Activated CD8-positive, alpha-beta memory T cell treated with anti-CD3 and anti-CD28 coated beads, Interleukin-2, amount 10 ng/mL, durations not matched to agents 7 days and 5 days (primary cell): ENCODE measurements at regions of chr17 and their contacts with region 1.

Region 1: GRCh38 chr17:17812211-17813057 is 24.4 kb downstream of the SREBF1 start:
- DNase-seq: peak; percentile 73
- ATAC-seq: peak; percentile 37
- H3K4me3 Mint-ChIP-seq: no peak overlapping the region
- H3K27ac Mint-ChIP-seq: no peak overlapping the region
- H3K4me1 Mint-ChIP-seq: peaks cover 25% of the 10 kb centered on the region
- H3K27me3 Mint-ChIP-seq: no peaks in the 10 kb centered on the region

Region 2: GRCh38 chr17:17681187-17681848 is 131.1 kb before region 1 on chr17 and contains the start of gene RAI1:
- CTCF ChIA-PET with region 1: interaction called, 10 read pairs
- DNase-seq: peak; percentile 75
- ATAC-seq: peak; percentile 72
- H3K4me3 Mint-ChIP-seq: peak within 1 kb of the TSS; percentile 85
- H3K27ac Mint-ChIP-seq: peak within 1 kb of the TSS; percentile 83
- H3K4me1 Mint-ChIP-seq: peaks cover 37% of the 10 kb centered on the region
- H3K27me3 Mint-ChIP-seq: peaks cover 13% of the 10 kb centered on the region
- total RNA-seq, gene RAI1: 17.4 to 24.4 TPM

Region 3: DNA sequence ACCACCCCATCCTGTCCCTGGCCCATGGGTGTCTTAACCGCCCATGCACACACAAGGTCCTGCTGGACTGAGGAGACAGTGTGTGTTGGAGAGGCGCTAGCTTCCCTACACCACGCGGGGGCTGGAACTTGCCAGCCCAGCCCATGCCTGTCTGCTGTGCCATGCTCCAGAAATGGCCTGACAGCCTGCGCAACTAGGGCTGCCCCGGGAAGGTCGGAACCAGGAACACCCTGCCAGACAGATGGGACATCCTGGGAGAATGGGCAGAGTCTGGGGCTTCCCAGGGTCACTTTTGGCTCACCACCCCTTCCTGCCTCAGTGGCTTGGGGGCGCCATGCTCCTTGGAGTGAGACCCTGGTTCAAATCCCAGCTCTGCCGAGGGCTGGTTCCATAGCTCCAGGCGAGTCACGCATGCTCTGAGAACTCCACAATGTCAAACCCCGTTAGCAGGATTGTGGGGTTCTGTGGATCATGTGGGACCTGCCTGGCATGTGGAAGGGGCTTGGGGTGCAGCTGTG is 11.9 kb before region 1 on chr17:
- CTCF ChIA-PET with region 1: interaction called, 10 read pairs
- DNase-seq: no peak
- ATAC-seq: no peak
- H3K4me3 Mint-ChIP-seq: no peak overlapping the region
- H3K27ac Mint-ChIP-seq: no peak overlapping the region
- H3K4me1 Mint-ChIP-seq: no peaks in the 10 kb centered on the region
- H3K27me3 Mint-ChIP-seq: no peaks in the 10 kb centered on the region

Region 4: GRCh38 chr17:17823433-17824118 is 11.1 kb after region 1 on chr17:
- CTCF ChIA-PET with region 1: interaction called, 47 read pairs
- DNase-seq: peak; percentile 91
- ATAC-seq: peak; percentile 92
- H3K4me3 Mint-ChIP-seq: peak overlapping the region; percentile 76
- H3K27ac Mint-ChIP-seq: peak overlapping the region; percentile 92
- H3K4me1 Mint-ChIP-seq: peaks cover 89% of the 10 kb centered on the region
- H3K27me3 Mint-ChIP-seq: no peaks in the 10 kb centered on the region

Region 5: GRCh38 chr17:17836250-17836817 is 23.9 kb after region 1 on chr17:
- CTCF ChIA-PET with region 1: interaction called, 11 read pairs
- DNase-seq: peak; percentile 98
- ATAC-seq: peak; percentile 77
- H3K4me3 Mint-ChIP-seq: peak overlapping the region; percentile 85
- H3K27ac Mint-ChIP-seq: peak overlapping the region; percentile 95
- H3K4me1 Mint-ChIP-seq: peaks cover 71% of the 10 kb centered on the region
- H3K27me3 Mint-ChIP-seq: no peaks in the 10 kb centered on the region

Region 6: GRCh38 chr17:17859909-17860765 is 47.7 kb after region 1 on chr17:
- CTCF ChIA-PET with region 1: interaction called, 66 read pairs
- DNase-seq: peak; percentile 73
- ATAC-seq: peak; percentile 94
- H3K4me3 Mint-ChIP-seq: no peak overlapping the region
- H3K27ac Mint-ChIP-seq: no peak overlapping the region
- H3K4me1 Mint-ChIP-seq: peaks cover 30% of the 10 kb centered on the region
- H3K27me3 Mint-ChIP-seq: peaks cover 2% of the 10 kb centered on the region

Region 7: DNA sequence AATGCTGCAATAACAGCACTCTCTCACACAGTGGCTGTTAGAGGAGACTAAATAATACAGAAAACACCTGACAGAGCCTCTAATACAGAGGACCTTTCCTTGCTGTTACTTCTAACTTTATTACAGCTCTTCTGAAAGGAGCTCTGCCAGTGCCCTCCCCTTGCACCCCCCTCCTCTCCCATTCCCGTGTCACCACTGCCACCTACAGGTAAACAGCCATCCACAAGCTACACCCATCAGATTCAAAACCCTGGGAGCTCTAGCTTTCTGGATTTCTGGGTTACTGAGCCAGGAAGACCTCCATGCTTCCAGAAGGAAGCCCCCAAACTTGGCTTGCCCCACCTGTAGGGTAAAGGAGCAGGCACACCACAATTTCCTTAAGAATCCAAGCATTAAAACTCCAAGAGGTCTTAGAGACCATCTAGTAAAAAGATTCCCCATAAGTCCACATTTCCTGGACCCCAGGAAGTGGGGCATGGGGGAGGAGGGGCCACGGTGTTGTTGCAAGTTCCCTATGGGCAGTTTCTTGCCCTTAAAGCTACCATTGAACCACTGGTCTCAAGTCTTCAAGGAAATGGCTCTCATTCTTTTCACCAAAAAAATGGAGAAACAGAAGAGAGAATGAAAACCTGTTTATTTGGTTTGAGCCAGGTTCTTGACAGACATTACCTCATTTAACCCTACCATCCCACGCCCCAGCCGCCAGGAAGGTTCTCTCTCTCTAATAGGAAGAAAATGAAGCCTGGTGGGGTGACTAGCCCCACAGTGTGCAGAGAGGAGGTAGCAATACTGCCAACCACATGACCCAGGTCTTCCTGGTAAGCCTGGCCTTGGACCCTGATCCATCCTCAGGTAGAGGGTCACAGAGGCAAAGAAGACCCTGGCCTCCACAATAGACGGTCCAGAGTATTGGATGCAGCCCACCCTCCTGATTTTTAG is 107.0 kb after region 1 on chr17:
- CTCF ChIA-PET with region 1: interaction called, 10 read pairs
- DNase-seq: peak; percentile 77
- ATAC-seq: peak; percentile 81
- H3K4me3 Mint-ChIP-seq: no peak overlapping the region
- H3K27ac Mint-ChIP-seq: no peak overlapping the region
- H3K4me1 Mint-ChIP-seq: peaks cover 14% of the 10 kb centered on the region
- H3K27me3 Mint-ChIP-seq: no peaks in the 10 kb centered on the region